ENCODE measurements at regions of chr3 and their contacts with region 1.

Region 1: GRCh38 chr3:177050501-177051237 is 146.6 kb downstream of the TBL1XR1 start:
- DNase-seq: no peak
- ATAC-seq: peak; percentile 60
- H3K4me3 Mint-ChIP-seq: no peak overlapping the region
- H3K27ac Mint-ChIP-seq: peak overlapping the region; percentile 31
- H3K4me1 Mint-ChIP-seq: peaks cover 12% of the 10 kb centered on the region
- H3K27me3 Mint-ChIP-seq: no peaks in the 10 kb centered on the region

Region 2: GRCh38 chr3:177597311-177598096 is 546.8 kb after region 1 on chr3:
- CTCF ChIA-PET with region 1: interaction called, 3 read pairs
- POLR2A ChIA-PET with region 1: no interaction called
- intact Hi-C with region 1: loop called (anchors 10 kb)
- DNase-seq: peak; percentile 51
- ATAC-seq: peak; percentile 68
- H3K4me3 Mint-ChIP-seq: peak overlapping the region; percentile 45
- H3K27ac Mint-ChIP-seq: peak overlapping the region; percentile 88
- H3K4me1 Mint-ChIP-seq: peaks cover 70% of the 10 kb centered on the region
- H3K27me3 Mint-ChIP-seq: no peaks in the 10 kb centered on the region

Region 3: GRCh38 chr3:177665122-177665808 is 614.6 kb after region 1 on chr3:
- CTCF ChIA-PET with region 1: no interaction called
- POLR2A ChIA-PET with region 1: no interaction called
- intact Hi-C with region 1: loop called in 1 of 2 experiments (anchors 5 kb)
- DNase-seq: no peak
- ATAC-seq: no peak
- H3K4me3 Mint-ChIP-seq: no peak overlapping the region
- H3K27ac Mint-ChIP-seq: no peak overlapping the region
- H3K4me1 Mint-ChIP-seq: no peaks in the 10 kb centered on the region
- H3K27me3 Mint-ChIP-seq: no peaks in the 10 kb centered on the region

Region 4: DNA sequence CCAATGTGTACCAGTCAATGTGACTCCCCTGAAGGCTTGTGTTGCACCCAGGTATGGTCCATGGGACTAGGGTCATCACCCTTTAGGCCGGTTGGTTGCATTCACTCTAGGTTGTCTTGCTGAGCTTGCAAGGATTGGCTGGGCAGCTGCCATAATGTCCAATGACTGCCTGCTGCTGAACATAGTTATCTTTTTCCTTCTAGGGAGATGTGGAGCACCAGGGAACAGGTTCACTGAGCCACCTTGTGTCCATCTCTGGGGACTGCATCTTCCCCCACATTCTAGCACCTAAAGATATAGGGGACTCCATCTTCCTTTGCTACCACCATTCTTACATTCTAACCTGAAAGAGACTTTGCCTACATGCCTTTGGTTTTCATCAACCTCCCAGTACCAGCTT is 727.0 kb after region 1 on chr3:
- CTCF ChIA-PET with region 1: interaction called, 3 read pairs
- POLR2A ChIA-PET with region 1: no interaction called
- intact Hi-C with region 1: loop called in 1 of 2 experiments (anchors 2 kb)
- DNase-seq: peak; percentile 63
- ATAC-seq: peak; percentile 77
- H3K4me3 Mint-ChIP-seq: no peak overlapping the region
- H3K27ac Mint-ChIP-seq: no peak overlapping the region
- H3K4me1 Mint-ChIP-seq: peaks cover 14% of the 10 kb centered on the region
- H3K27me3 Mint-ChIP-seq: no peaks in the 10 kb centered on the region

Region 5: GRCh38 chr3:177994976-177995375 is 944.3 kb after region 1 on chr3:
- CTCF ChIA-PET with region 1: no interaction called
- POLR2A ChIA-PET with region 1: no interaction called
- intact Hi-C with region 1: loop called in 1 of 2 experiments (anchors 10 kb)
- DNase-seq: no peak
- ATAC-seq: peak; percentile 47
- H3K4me3 Mint-ChIP-seq: no peak overlapping the region
- H3K27ac Mint-ChIP-seq: peak overlapping the region; percentile 80
- H3K4me1 Mint-ChIP-seq: peaks cover 28% of the 10 kb centered on the region
- H3K27me3 Mint-ChIP-seq: no peaks in the 10 kb centered on the region

Region 6: GRCh38 chr3:178155521-178155920 is 1104.9 kb after region 1 on chr3:
- CTCF ChIA-PET with region 1: no interaction called
- POLR2A ChIA-PET with region 1: no interaction called
- intact Hi-C with region 1: loop called in 1 of 2 experiments (anchors 10 kb)
- DNase-seq: peak; percentile 9
- ATAC-seq: no peak
- H3K4me3 Mint-ChIP-seq: no peak overlapping the region
- H3K27ac Mint-ChIP-seq: no peak overlapping the region
- H3K4me1 Mint-ChIP-seq: peaks cover 2% of the 10 kb centered on the region
- H3K27me3 Mint-ChIP-seq: no peaks in the 10 kb centered on the region

Measured in activated CD4-positive, alpha-beta T cell treated with anti-CD3 and anti-CD28 coated beads for 36 hours (primary cell).